ENCODE measurements at regions of chr3 and their contacts with region 1.

Region 1: DNA sequence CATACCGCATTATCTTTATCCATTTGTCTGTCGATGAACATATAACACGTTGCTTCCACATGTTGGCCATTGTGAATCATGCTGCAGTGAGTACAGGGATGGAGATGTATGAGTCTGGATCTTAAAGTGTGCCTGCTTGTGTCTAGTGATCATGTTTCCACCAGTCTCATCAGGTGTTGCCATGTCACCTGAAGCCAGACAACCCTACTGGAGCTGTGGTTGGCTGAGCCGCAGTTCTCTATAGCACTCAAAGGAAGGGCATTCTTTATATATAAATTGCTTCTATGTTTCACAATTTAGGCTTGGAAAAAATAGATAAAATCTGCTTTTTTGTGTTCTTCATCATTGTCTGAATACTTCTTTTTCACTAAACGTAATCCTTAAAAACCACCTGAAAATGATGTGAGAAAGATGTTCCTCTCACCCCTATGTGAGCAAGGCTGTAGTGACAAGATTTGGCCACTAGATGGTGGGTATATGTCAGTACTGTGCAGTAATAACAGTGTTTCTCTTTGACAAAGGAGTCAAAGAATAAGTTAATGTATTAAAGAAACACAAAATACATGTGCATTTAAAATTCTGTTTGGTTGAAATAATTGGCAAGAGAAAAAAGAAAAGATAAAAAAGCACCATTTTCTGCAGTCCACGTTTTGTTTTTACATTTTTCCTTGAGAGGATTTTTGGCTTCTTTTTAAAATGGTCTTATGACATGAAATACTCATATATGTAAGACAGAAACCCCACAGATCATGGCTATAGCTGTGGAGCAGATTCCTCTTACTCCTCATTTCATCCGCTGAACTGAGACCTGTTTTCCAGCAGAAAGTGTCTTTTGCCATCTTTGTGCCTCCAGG is 394.5 kb upstream of the DPPA4 start:
- DNase-seq: no peak
- ATAC-seq: no peak
- H3K4me3 ChIP-seq: no peak overlapping the region
- H3K27ac ChIP-seq: no peak overlapping the region
- H3K4me1 ChIP-seq: no peaks in the 10 kb centered on the region
- H3K27me3 ChIP-seq: no peaks in the 10 kb centered on the region
- CTCF ChIP-seq: peak in 4 of 5 experiments; percentile 26 to 57 (median 41)
- POLR2A ChIP-seq: no peak

Region 2: DNA sequence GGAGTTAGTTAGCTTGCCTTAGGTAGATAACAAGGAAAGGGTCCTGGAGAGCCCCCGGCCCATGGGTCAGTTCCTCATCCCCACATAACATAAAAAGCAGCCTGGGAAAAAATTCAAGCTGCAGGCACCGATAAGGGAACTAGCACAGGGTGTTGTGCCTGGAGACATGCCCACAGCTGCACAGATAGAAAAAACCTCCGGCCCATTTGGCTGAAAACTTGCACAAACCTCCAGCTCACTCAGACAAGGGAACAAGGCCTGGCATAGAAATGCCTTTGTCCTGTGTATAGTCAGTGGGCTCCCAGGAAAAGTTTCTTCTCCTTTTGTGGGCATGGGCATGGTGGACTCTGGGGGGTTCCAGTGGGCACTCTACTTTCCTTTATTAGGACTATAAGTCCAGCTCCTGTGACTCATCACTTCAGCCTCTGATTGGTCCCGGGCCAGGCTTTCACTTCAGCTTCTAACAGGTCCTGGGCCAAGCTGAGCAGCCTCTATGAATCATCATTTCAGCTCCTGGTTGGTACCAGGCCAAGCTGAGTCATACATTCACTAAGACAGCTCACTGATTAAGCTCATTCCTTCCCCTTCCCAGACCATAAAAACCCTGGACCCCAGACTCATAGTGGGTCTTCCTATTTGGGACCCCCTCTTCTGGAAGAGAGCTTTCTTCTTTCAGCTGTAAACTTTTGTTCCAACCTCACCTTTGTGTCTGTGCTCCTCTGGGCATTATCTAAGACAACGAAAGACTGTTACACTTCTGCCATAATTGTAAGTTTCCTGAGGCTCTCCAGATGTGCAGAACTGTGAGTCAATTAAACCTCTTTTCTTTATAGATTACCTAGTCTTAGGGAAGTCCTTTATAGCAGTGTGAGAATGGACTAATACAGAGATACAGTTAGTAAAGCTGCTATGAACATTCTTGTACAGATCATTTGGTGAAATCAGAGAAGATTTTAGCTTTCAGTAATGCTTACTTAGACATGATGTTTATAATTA is 46.5 kb before region 1 on chr3:
- in situ Hi-C with region 1: no loop called
- intact Hi-C with region 1: no loop called
- DNase-seq: peak; percentile 20 to 44
- ATAC-seq: peak; percentile 30 to 56
- H3K4me3 ChIP-seq: no peak overlapping the region
- H3K27ac ChIP-seq: no peak overlapping the region
- H3K4me1 ChIP-seq: no peaks in the 10 kb centered on the region
- H3K27me3 ChIP-seq: no peaks in the 10 kb centered on the region
- CTCF ChIP-seq: no peak
- POLR2A ChIP-seq: no peak

Region 3: GRCh38 chr3:109784852-109785631 is 53.2 kb after region 1 on chr3:
- in situ Hi-C with region 1: no loop called
- intact Hi-C with region 1: no loop called
- DNase-seq: no peak
- ATAC-seq: no peak
- H3K4me3 ChIP-seq: no peak overlapping the region
- H3K27ac ChIP-seq: no peak overlapping the region
- H3K4me1 ChIP-seq: no peaks in the 10 kb centered on the region
- H3K27me3 ChIP-seq: no peaks in the 10 kb centered on the region
- CTCF ChIP-seq: no peak
- POLR2A ChIP-seq: no peak

Region 4: DNA sequence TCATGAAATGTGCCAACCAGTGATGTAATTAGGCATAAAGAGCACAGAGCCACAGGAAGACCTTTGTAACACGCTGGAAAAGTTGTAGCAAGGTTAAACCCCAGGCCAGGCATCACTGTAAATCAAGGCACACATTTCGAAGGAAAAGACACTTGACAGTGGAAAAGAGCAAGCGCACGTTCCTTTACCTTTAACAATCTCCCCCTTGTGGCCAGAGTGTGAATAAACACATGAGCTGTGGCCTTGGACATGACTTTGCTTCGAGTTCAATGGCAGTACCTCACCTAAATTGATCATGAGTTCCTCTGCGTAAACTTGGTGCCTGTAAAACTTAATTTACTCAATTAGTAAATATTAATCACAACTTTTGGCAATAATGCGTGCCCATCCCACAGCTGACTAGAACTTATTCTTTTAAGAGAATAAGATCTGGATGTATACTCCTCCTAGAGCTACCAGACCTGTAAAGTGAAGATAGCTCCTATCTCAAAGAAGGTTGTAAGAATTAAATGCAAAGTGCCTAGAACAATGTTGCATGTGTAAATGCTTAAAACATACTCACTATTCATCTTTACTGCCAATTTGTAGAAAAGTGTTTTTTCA is 582.8 kb after region 1 on chr3:
- in situ Hi-C with region 1: loop called in 1 of 4 experiments (anchors 25 kb)
- intact Hi-C with region 1: no loop called
- DNase-seq: no peak
- ATAC-seq: no peak
- H3K4me3 ChIP-seq: no peak overlapping the region
- H3K27ac ChIP-seq: no peak overlapping the region
- H3K4me1 ChIP-seq: no peaks in the 10 kb centered on the region
- H3K27me3 ChIP-seq: no peaks in the 10 kb centered on the region
- CTCF ChIP-seq: peak in 4 of 5 experiments; percentile 35 to 57 (median 46)
- POLR2A ChIP-seq: no peak

Measured in gastrocnemius medialis (tissue), 4 donors.